Sigmoid colon (tissue), 7 donors: ENCODE measurements at regions of chr10 and their contacts with region 1.

Region 1: GRCh38 chr10:116627386-116627933 is 6.7 kb downstream of the PNLIPRP2 start:
- DNase-seq: no peak
- H3K4me3 ChIP-seq: peak overlapping the region in 3 of 4 donors; percentile 15 to 30 (median 23)
- H3K27ac ChIP-seq: no peak overlapping the region
- H3K4me1 ChIP-seq: peaks cover 0 to 8% (median 4%) of the 10 kb centered on the region in 4 donors
- H3K27me3 ChIP-seq: peaks cover 0 to 25% (median 17%) of the 10 kb centered on the region in 3 donors
- CTCF ChIP-seq: peak in 3 of 4 experiments; percentile 20 to 50 (median 30)
- EP300 ChIP-seq: no peak
- POLR2A ChIP-seq: no peak

Region 2: GRCh38 chr10:116263918-116264655 is 363.4 kb before region 1 on chr10:
- intact Hi-C with region 1: no loop called
- DNase-seq: no peak
- H3K4me3 ChIP-seq: no peak overlapping the region
- H3K27ac ChIP-seq: no peak overlapping the region
- H3K4me1 ChIP-seq: peaks cover 0 to 5% (median 0%) of the 10 kb centered on the region in 4 donors
- H3K27me3 ChIP-seq: no peaks in the 10 kb centered on the region
- CTCF ChIP-seq: no peak
- EP300 ChIP-seq: no peak
- POLR2A ChIP-seq: no peak

Region 3: DNA sequence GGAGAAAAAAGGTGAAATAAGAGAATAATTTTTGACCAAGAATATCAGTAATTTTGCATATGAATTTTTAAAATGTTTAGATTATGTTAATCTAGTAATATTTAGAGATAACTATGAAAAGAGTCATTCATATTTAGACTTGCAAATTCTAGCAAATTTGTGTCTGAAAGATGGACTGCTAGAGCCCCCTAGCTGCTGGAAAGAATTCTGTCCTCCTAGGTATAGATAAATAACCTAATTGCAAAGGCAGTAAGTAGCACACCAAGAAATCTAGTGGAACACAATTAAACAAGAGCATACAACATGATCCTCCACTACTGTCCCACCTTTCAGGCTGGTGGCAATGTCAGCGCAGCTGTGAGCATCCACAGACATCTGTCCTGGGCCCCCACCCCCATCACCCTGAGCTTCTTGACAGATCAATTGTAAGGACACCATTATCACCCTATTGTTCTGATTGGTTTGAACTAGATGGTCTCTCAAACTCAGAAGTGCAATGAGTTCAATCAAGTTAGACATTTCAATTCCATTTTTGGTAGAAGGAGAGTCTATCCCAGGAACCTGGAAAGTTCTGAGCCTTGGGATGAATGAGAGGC is 339.5 kb before region 1 on chr10:
- intact Hi-C with region 1: no loop called
- DNase-seq: no peak
- H3K4me3 ChIP-seq: no peak overlapping the region
- H3K27ac ChIP-seq: no peak overlapping the region
- H3K4me1 ChIP-seq: no peaks in the 10 kb centered on the region
- H3K27me3 ChIP-seq: no peaks in the 10 kb centered on the region
- CTCF ChIP-seq: peak; percentile 40 to 75 (median 61)
- EP300 ChIP-seq: no peak
- POLR2A ChIP-seq: no peak

Region 4: DNA sequence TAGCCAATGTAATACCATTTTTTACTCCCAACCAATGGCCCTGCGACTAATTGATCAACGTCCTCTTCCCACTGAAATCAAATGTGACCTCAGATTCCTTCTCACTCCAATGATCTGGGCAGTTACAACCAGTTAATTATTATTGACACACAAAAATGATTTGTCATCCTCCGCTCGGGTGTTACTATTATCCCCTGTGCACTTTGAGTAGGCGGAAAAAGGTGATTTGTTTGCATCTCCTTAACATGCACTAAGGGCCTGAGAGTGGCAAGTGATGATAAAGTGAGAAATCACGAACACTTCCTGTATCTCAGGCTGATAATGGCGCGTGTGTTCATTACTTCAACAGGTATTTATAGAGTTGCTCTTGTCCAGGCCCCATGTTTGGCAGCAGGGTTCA is 122.7 kb before region 1 on chr10:
- intact Hi-C with region 1: no loop called
- DNase-seq: no peak
- H3K4me3 ChIP-seq: no peak overlapping the region
- H3K27ac ChIP-seq: no peak overlapping the region
- H3K4me1 ChIP-seq: no peaks in the 10 kb centered on the region
- H3K27me3 ChIP-seq: no peaks in the 10 kb centered on the region
- CTCF ChIP-seq: no peak
- EP300 ChIP-seq: no peak
- POLR2A ChIP-seq: no peak

Region 5: GRCh38 chr10:116787893-116788665 is 160.6 kb after region 1 on chr10:
- intact Hi-C with region 1: loop called (anchors 5 kb)
- DNase-seq: peak; percentile 88
- H3K4me3 ChIP-seq: peak overlapping the region in 3 of 4 donors; percentile 17 to 27 (median 18)
- H3K27ac ChIP-seq: no peak overlapping the region
- H3K4me1 ChIP-seq: peaks cover 0 to 5% (median 2%) of the 10 kb centered on the region in 4 donors
- H3K27me3 ChIP-seq: no peaks in the 10 kb centered on the region
- CTCF ChIP-seq: peak; percentile 91 to 100 (median 93)
- EP300 ChIP-seq: no peak
- POLR2A ChIP-seq: no peak